ENCODE measurements at regions of chr17 and their contacts with region 1.

Region 1: DNA sequence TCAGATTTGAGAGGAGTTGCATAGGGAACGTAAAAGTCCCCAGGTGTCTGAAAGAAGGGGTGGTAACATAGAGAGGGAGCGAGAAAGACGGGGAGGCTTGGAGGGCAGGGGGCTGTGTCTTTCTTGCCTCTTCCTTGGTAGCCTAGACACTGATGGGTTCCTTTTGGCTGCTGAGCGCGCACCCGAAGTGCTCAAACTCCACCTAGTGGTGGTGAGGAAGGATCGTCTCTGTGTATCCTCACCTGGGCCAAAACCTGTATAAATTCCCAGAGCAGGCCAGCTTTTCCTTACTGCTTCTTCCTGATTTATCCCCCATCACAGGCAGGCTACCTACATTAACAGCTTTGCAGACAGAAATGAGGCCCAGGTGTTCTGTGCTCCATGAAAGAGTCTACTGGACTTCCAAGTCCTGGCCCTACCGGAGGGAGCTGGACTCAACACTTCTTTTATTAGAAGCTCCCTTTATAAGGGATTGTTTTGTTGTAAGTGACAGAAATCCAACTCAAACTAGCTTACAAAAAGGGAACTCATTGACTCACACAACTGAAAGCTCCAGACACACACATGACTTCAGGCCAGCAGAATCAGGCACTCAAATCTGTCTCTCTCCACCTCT is 5.5 kb upstream of the SLC25A35 start:
- DNase-seq: peak; percentile 36 to 73 (median 60)
- H3K4me3 ChIP-seq: no peak overlapping the region
- H3K27ac ChIP-seq: peak overlapping the region in 7 of 59 donors; percentile 8 to 53 (median 29)
- H3K27me3 ChIP-seq: no peaks in the 10 kb centered on the region
- CTCF ChIP-seq: peak; percentile 64 to 94 (median 87)

Region 2: GRCh38 chr17:7627250-7628121 is 673.2 kb before region 1 on chr17 and contains the start of gene SAT2:
- intact Hi-C with region 1: no loop called
- DNase-seq: peak; percentile 85 to 97 (median 95)
- H3K4me3 ChIP-seq: peak within 1 kb of the TSS; percentile 62 to 94 (median 84)
- H3K27ac ChIP-seq: peak within 1 kb of the TSS; percentile 65 to 98 (median 92)
- H3K27me3 ChIP-seq: no peaks in the 10 kb centered on the region
- CTCF ChIP-seq: peak in 15 of 56 donors; percentile 10 to 48 (median 20)
- total RNA-seq, gene SAT2: 72.5 to 143 (median 99.8) TPM

Region 3: GRCh38 chr17:8068736-8069586 is 231.8 kb before region 1 on chr17:
- intact Hi-C with region 1: loop called in 1 of 2 experiments (anchors 5 kb)
- DNase-seq: no peak
- H3K4me3 ChIP-seq: no peak overlapping the region
- H3K27ac ChIP-seq: no peak overlapping the region
- H3K27me3 ChIP-seq: peaks cover 0 to 40% (median 27%) of the 10 kb centered on the region in 45 donors
- CTCF ChIP-seq: no peak

Region 4: GRCh38 chr17:8441690-8442089 is 141.0 kb after region 1 on chr17:
- intact Hi-C with region 1: no loop called
- DNase-seq: no peak
- H3K4me3 ChIP-seq: no peak overlapping the region
- H3K27ac ChIP-seq: no peak overlapping the region
- H3K27me3 ChIP-seq: no peaks in the 10 kb centered on the region
- CTCF ChIP-seq: no peak